CD8-positive, alpha-beta T cell (primary cell): ENCODE measurements at regions of chr6 and their contacts with region 1.

Region 1: DNA sequence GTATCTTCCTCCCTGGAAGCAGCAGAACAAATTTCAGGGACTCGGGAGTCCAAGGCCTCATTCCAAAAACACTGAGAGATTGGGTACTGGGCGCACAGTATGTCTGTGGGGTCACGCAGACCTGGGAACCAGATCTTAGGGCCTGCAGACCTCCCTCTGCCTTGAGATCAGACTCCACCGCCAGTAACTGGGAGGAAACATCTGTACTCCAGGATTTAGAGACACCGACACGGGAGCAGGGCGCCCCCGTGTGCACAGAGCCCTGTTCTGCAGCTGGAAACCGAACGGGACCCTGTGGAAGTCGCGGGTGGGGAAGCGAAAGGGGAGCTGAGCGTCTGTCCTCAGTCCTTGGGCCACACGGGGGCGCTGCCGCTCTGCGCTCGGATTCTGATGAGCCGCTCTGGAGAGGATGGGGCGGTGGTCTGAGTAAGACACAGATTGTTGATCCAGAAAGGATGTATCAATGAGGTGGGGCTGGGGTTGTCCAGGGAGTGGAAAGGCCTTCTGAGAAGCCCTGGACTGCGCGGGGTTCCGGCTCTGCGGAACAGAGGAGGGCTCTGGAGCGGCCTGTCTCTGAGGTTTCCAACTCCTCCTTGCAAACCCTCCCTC is 35.7 kb upstream of the HLA-E start:
- DNase-seq: peak; percentile 71 to 93 (median 87)
- ATAC-seq: peak; percentile 83
- H3K4me3 ChIP-seq: peak overlapping the region in 1 of 2 experiments; percentile 41
- H3K4me3 Mint-ChIP-seq: peak overlapping the region; percentile 49
- H3K27ac ChIP-seq: no peak overlapping the region
- H3K27ac Mint-ChIP-seq: no peak overlapping the region
- H3K4me1 ChIP-seq: peaks cover 42% of the 10 kb centered on the region
- H3K4me1 Mint-ChIP-seq: peaks cover 41% of the 10 kb centered on the region
- H3K27me3 ChIP-seq: peaks cover 38 to 64% of the 10 kb centered on the region in 2 experiments
- H3K27me3 Mint-ChIP-seq: peaks cover 68% of the 10 kb centered on the region
- CTCF ChIP-seq: peak; percentile 63

Region 2: GRCh38 chr6:30411515-30412207 is 42.0 kb before region 1 on chr6:
- CTCF ChIA-PET with region 1: interaction called, 8 read pairs
- POLR2A ChIA-PET with region 1: no interaction called
- intact Hi-C with region 1: loop called in 1 of 2 experiments (anchors 1 kb)
- DNase-seq: peak; percentile 29 to 77 (median 64)
- ATAC-seq: peak; percentile 63
- H3K4me3 ChIP-seq: no peak overlapping the region
- H3K4me3 Mint-ChIP-seq: peak overlapping the region; percentile 52
- H3K27ac ChIP-seq: no peak overlapping the region
- H3K27ac Mint-ChIP-seq: no peak overlapping the region
- H3K4me1 ChIP-seq: peaks cover 3% of the 10 kb centered on the region
- H3K4me1 Mint-ChIP-seq: peaks cover 7% of the 10 kb centered on the region
- H3K27me3 ChIP-seq: peaks cover 8% of the 10 kb centered on the region in 2 experiments
- H3K27me3 Mint-ChIP-seq: peaks cover 41% of the 10 kb centered on the region
- CTCF ChIP-seq: peak; percentile 83

Region 3: DNA sequence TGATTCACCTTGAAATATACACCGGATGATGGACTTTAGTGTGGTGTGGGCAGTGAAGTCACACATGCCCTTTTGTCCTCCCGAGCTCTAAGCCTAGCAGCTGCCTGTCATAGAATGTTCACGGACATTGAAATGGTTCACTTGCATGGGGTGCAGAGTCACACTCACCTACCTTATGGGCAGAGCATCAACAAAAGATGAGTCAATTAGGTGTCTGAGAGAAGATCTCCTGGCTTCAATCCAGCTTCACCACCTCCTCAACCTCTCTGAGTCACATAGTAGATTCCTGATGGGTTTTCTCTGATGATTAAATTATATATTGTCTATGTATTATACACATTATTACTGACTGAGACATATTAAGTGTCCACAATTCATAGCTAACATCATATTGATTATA is 12.4 kb before region 1 on chr6:
- CTCF ChIA-PET with region 1: interaction called, 16 read pairs
- POLR2A ChIA-PET with region 1: interaction called, 3 read pairs
- intact Hi-C with region 1: no loop called
- DNase-seq: peak in 1 of 9 experiments; percentile 17
- ATAC-seq: no peak
- H3K4me3 ChIP-seq: no peak overlapping the region
- H3K4me3 Mint-ChIP-seq: no peak overlapping the region
- H3K27ac ChIP-seq: no peak overlapping the region
- H3K27ac Mint-ChIP-seq: no peak overlapping the region
- H3K4me1 ChIP-seq: no peaks in the 10 kb centered on the region
- H3K4me1 Mint-ChIP-seq: peaks cover 7% of the 10 kb centered on the region
- H3K27me3 ChIP-seq: peaks cover 24 to 35% of the 10 kb centered on the region in 2 experiments
- H3K27me3 Mint-ChIP-seq: peaks cover 55% of the 10 kb centered on the region
- CTCF ChIP-seq: no peak

Region 4: DNA sequence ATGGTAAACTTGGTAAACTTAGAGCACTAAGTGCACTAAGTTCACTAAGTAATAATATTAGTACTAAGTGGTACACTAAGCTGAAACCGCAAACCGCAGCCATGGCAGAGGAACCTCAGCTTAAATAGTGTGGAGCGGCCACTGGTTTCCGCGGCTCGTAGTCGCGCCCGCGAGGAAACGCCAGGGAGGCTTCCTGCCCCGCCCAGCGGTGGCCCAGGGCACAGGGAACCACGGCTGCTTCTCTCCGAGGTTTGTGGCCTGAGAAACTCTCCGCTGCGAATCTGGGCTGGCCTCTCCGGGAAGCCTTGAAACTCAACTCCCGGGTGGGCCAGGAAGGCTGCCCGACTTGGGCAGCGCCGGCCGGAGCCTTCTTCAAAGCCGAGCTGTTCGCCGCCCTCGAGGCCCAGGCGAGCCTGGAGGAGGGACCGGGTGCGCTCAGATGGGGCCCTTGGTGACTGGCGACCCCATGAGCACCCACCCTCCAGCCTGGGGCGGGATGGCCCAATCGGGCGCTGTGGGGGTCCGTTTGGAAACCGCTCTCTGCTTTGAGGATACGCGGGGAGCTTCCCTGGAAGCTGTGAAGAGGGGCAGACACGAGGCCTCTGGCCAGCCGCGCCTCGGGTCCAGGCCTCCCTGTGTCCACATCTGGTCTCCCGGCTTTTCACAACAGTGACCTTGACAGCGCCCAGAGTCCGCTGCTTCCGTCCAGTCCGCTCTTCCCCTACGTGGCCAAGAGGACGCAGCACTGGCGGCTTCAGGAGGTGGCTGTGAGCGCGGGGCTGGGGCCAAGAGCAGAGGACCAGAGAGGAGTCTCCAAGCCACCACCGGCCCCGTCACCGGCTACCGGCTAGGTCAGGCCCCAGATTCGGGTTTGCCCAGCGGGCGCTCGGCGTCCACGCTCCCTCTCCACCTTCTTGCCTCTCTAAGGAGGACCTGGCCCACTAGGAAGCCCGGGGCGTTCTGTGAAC is 10.3 kb after region 1 on chr6:
- CTCF ChIA-PET with region 1: interaction called, 74 read pairs
- POLR2A ChIA-PET with region 1: interaction called, 8 read pairs
- intact Hi-C with region 1: loop called in 1 of 2 experiments (anchors 2 kb)
- DNase-seq: peak; percentile 34 to 86 (median 69)
- ATAC-seq: peak; percentile 48
- H3K4me3 ChIP-seq: no peak overlapping the region
- H3K4me3 Mint-ChIP-seq: peak overlapping the region; percentile 33
- H3K27ac ChIP-seq: no peak overlapping the region
- H3K27ac Mint-ChIP-seq: no peak overlapping the region
- H3K4me1 ChIP-seq: peaks cover 46% of the 10 kb centered on the region
- H3K4me1 Mint-ChIP-seq: peaks cover 48% of the 10 kb centered on the region
- H3K27me3 ChIP-seq: peaks cover 56 to 78% of the 10 kb centered on the region in 2 experiments
- H3K27me3 Mint-ChIP-seq: peaks cover 76% of the 10 kb centered on the region
- CTCF ChIP-seq: no peak

Region 5: DNA sequence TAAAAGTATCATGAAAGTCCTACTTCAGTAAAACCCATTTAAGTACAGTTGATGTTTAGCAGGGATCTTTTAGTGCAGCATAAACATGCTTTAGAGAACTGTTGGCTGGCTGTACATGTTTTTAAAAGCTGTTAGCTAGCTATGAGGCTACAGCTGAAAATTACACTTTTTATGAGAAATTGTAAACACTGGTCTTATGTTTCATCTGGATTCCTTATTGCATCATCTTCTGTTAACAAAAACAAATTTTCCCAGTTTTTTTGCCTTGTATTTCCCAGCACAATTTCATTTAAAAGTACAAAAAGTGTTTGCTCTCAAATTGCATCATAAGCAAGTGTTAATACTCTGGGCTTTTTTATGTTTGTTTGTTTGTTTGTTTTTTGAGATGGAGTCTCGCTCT is 17.4 kb after region 1 on chr6:
- CTCF ChIA-PET with region 1: interaction called, 74 read pairs
- POLR2A ChIA-PET with region 1: interaction called, 6 read pairs
- intact Hi-C with region 1: loop called in 1 of 2 experiments (anchors 2 kb)
- DNase-seq: no peak
- ATAC-seq: no peak
- H3K4me3 ChIP-seq: no peak overlapping the region
- H3K4me3 Mint-ChIP-seq: no peak overlapping the region
- H3K27ac ChIP-seq: no peak overlapping the region
- H3K27ac Mint-ChIP-seq: no peak overlapping the region
- H3K4me1 ChIP-seq: peaks cover 12% of the 10 kb centered on the region
- H3K4me1 Mint-ChIP-seq: peaks cover 9% of the 10 kb centered on the region
- H3K27me3 ChIP-seq: peaks cover 32% of the 10 kb centered on the region in 2 experiments
- H3K27me3 Mint-ChIP-seq: peaks cover 65% of the 10 kb centered on the region
- CTCF ChIP-seq: no peak

Region 6: GRCh38 chr6:30672445-30673253 is 219.0 kb after region 1 on chr6 and contains the start of gene DHX16:
- CTCF ChIA-PET with region 1: interaction called, 3 read pairs
- POLR2A ChIA-PET with region 1: no interaction called
- intact Hi-C with region 1: loop called in 1 of 2 experiments (anchors 1 kb)
- DNase-seq: peak; percentile 77 to 96 (median 90)
- ATAC-seq: peak; percentile 79
- H3K4me3 ChIP-seq: peak within 1 kb of the TSS; percentile 69 to 81
- H3K4me3 Mint-ChIP-seq: peak within 1 kb of the TSS; percentile 90
- H3K27ac ChIP-seq: peak within 1 kb of the TSS; percentile 51 to 71
- H3K27ac Mint-ChIP-seq: peak within 1 kb of the TSS; percentile 82
- H3K4me1 ChIP-seq: peaks cover 15% of the 10 kb centered on the region
- H3K4me1 Mint-ChIP-seq: peaks cover 38% of the 10 kb centered on the region
- H3K27me3 ChIP-seq: no peaks in the 10 kb centered on the region
- H3K27me3 Mint-ChIP-seq: no peaks in the 10 kb centered on the region
- CTCF ChIP-seq: peak; percentile 38
- total RNA-seq, gene DHX16: 15.8 to 17.9 TPM

Region 7: GRCh38 chr6:30730601-30731435 is 277.2 kb after region 1 on chr6:
- CTCF ChIA-PET with region 1: interaction called, 4 read pairs
- POLR2A ChIA-PET with region 1: no interaction called
- intact Hi-C with region 1: loop called in 1 of 2 experiments (anchors 10 kb)
- DNase-seq: peak; percentile 67 to 91 (median 85)
- ATAC-seq: peak; percentile 98
- H3K4me3 ChIP-seq: peak overlapping the region in 1 of 2 experiments; percentile 21
- H3K4me3 Mint-ChIP-seq: peak overlapping the region; percentile 47
- H3K27ac ChIP-seq: no peak overlapping the region
- H3K27ac Mint-ChIP-seq: no peak overlapping the region
- H3K4me1 ChIP-seq: peaks cover 29% of the 10 kb centered on the region
- H3K4me1 Mint-ChIP-seq: peaks cover 37% of the 10 kb centered on the region
- H3K27me3 ChIP-seq: no peaks in the 10 kb centered on the region
- H3K27me3 Mint-ChIP-seq: no peaks in the 10 kb centered on the region
- CTCF ChIP-seq: peak; percentile 67